ENCODE measurements at regions of chr4 and their contacts with region 1.

Region 1: GRCh38 chr4:174365018-174365587 is 81.4 kb downstream of the CEP44 start:
- DNase-seq: peak; percentile 6
- H3K4me3 ChIP-seq: no peak overlapping the region
- H3K27ac ChIP-seq: no peak overlapping the region
- H3K27me3 ChIP-seq: no peaks in the 10 kb centered on the region
- CTCF ChIP-seq: peak; percentile 50

Region 2: GRCh38 chr4:174408563-174409552 is 43.8 kb after region 1 on chr4:
- CTCF ChIA-PET with region 1: no interaction called
- POLR2A ChIA-PET with region 1: no interaction called
- DNase-seq: no peak
- H3K4me3 ChIP-seq: no peak overlapping the region
- H3K27ac ChIP-seq: no peak overlapping the region
- H3K27me3 ChIP-seq: no peaks in the 10 kb centered on the region
- CTCF ChIP-seq: no peak

Region 3: GRCh38 chr4:174538123-174538875 is 173.2 kb after region 1 on chr4:
- CTCF ChIA-PET with region 1: no interaction called
- POLR2A ChIA-PET with region 1: no interaction called
- DNase-seq: no peak
- H3K4me3 ChIP-seq: no peak overlapping the region
- H3K27ac ChIP-seq: no peak overlapping the region
- H3K27me3 ChIP-seq: no peaks in the 10 kb centered on the region
- CTCF ChIP-seq: no peak

Region 4: GRCh38 chr4:174631901-174632758 is 267.0 kb after region 1 on chr4:
- CTCF ChIA-PET with region 1: interaction called, 23 read pairs
- POLR2A ChIA-PET with region 1: no interaction called
- DNase-seq: peak; percentile 2
- H3K4me3 ChIP-seq: no peak overlapping the region
- H3K27ac ChIP-seq: no peak overlapping the region
- H3K27me3 ChIP-seq: no peaks in the 10 kb centered on the region
- CTCF ChIP-seq: peak; percentile 72